ENCODE measurements at regions of chr5 and their contacts with region 1.

Region 1: DNA sequence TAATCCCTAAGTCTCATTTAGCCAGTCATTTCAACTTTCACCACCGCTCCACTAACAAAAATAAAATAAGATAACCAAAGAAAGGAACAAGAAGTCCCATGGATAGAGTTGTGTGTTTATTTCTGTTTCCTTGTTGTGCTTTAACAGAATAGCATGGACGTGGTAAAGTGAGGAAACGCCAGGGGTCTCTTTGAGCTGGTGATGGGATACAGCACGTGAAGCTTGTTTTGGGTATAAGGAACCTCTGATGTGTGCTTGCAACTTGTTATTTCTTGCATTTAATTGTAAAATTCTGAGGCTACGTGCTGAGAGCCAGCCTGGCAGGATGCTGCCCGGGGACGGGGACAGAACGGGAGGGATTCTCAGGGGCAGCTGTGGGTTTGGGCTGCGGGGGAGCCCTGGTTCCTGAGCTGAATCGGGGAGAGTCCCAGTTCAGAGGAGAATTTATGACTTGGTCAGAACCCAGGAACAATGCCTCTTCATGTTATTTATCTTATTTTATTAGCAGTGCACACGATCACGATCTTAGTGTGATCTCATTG is 63.4 kb downstream of the ANKRD33B start:
- DNase-seq: no peak
- H3K4me3 ChIP-seq: peak overlapping the region; percentile 1 to 13
- H3K27ac ChIP-seq: peak overlapping the region; percentile 82
- H3K4me1 ChIP-seq: peaks cover 30% of the 10 kb centered on the region
- H3K27me3 ChIP-seq: no peaks in the 10 kb centered on the region
- CTCF ChIP-seq: no peak
- POLR2A ChIP-seq: no peak

Region 2: GRCh38 chr5:10229306-10230048 is 397.8 kb before region 1 on chr5:
- intact Hi-C with region 1: no loop called
- DNase-seq: no peak
- H3K4me3 ChIP-seq: no peak overlapping the region
- H3K27ac ChIP-seq: no peak overlapping the region
- H3K4me1 ChIP-seq: no peaks in the 10 kb centered on the region
- H3K27me3 ChIP-seq: no peaks in the 10 kb centered on the region
- CTCF ChIP-seq: no peak
- POLR2A ChIP-seq: no peak

Region 3: GRCh38 chr5:10457682-10458574 is 169.3 kb before region 1 on chr5:
- intact Hi-C with region 1: loop called (anchors 5 kb)
- DNase-seq: no peak
- H3K4me3 ChIP-seq: no peak overlapping the region
- H3K27ac ChIP-seq: no peak overlapping the region
- H3K4me1 ChIP-seq: peaks cover 11% of the 10 kb centered on the region
- H3K27me3 ChIP-seq: no peaks in the 10 kb centered on the region
- CTCF ChIP-seq: no peak
- POLR2A ChIP-seq: no peak